CD8-positive, alpha-beta T cell (primary cell): ENCODE measurements at regions of chr14 and their contacts with region 1.

Region 1: DNA sequence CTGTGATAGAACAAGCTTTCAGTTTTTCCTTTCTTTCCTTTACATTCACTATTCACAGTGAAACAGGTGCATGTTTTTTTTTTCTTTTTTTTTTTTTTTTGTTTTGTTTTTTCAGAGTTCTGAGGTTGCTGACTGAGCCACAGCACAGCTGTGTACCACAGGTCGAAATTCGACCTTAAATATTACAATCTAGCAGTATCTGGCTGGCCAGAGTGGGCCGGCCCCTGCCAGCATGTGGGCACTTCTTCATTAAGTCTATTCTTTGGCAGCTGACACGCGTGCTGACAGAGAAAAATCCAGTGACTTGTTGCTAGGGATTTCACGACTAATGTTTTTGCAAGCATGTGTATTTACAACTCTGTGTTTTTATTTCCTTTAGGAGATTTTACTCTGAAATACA is 33.9 kb downstream of the FBXO33 start:
- DNase-seq: no peak
- ATAC-seq: no peak
- H3K4me3 ChIP-seq: no peak overlapping the region
- H3K4me3 Mint-ChIP-seq: no peak overlapping the region
- H3K27ac ChIP-seq: no peak overlapping the region
- H3K27ac Mint-ChIP-seq: no peak overlapping the region
- H3K4me1 ChIP-seq: no peaks in the 10 kb centered on the region
- H3K4me1 Mint-ChIP-seq: peaks cover 6% of the 10 kb centered on the region
- H3K27me3 ChIP-seq: no peaks in the 10 kb centered on the region
- H3K27me3 Mint-ChIP-seq: no peaks in the 10 kb centered on the region
- CTCF ChIP-seq: no peak

Region 2: DNA sequence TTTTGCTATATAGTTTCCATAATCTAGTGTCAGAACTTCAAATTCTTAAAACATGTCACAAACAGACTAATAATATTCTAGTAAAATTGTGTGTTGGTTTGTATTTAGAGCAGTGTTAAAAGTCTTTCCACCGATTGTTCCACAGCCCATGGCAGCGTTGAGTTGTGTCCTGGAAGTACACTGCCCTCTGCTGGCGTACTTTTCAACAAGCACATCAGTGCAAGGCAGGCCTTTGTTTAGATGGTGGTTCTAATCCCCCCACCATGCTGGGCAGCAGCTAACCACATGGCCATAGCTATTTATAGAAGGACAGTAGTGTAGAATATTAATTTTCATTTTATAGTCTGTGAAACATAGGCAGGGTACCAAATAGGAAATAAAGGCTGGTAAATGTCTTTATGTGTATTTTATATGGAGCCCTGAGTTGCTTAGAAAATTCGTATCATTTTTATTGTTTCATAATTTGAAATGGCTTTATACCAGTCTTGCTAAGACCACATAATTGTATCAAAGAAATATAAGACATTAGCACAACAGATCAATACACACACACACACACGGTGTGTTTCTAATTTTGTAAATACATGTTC is 530.7 kb before region 1 on chr14:
- CTCF ChIA-PET with region 1: no interaction called
- POLR2A ChIA-PET with region 1: no interaction called
- intact Hi-C with region 1: no loop called
- DNase-seq: peak in 8 of 9 experiments; percentile 26 to 70 (median 48)
- ATAC-seq: peak; percentile 34
- H3K4me3 ChIP-seq: no peak overlapping the region
- H3K4me3 Mint-ChIP-seq: no peak overlapping the region
- H3K27ac ChIP-seq: no peak overlapping the region
- H3K27ac Mint-ChIP-seq: no peak overlapping the region
- H3K4me1 ChIP-seq: no peaks in the 10 kb centered on the region
- H3K4me1 Mint-ChIP-seq: no peaks in the 10 kb centered on the region
- H3K27me3 ChIP-seq: no peaks in the 10 kb centered on the region
- H3K27me3 Mint-ChIP-seq: peaks cover 2% of the 10 kb centered on the region
- CTCF ChIP-seq: peak; percentile 74

Region 3: GRCh38 chr14:39426605-39427004 is 28.2 kb after region 1 on chr14:
- CTCF ChIA-PET with region 1: no interaction called
- POLR2A ChIA-PET with region 1: interaction called, 9 read pairs
- intact Hi-C with region 1: loop called in 1 of 2 experiments (anchors 2 kb)
- DNase-seq: peak in 2 of 9 experiments; percentile 22 to 46
- ATAC-seq: no peak
- H3K4me3 ChIP-seq: no peak overlapping the region
- H3K4me3 Mint-ChIP-seq: peak overlapping the region; percentile 33
- H3K27ac ChIP-seq: no peak overlapping the region
- H3K27ac Mint-ChIP-seq: peak overlapping the region; percentile 3
- H3K4me1 ChIP-seq: peaks cover 64% of the 10 kb centered on the region
- H3K4me1 Mint-ChIP-seq: peaks cover 82% of the 10 kb centered on the region
- H3K27me3 ChIP-seq: no peaks in the 10 kb centered on the region
- H3K27me3 Mint-ChIP-seq: no peaks in the 10 kb centered on the region
- CTCF ChIP-seq: peak; percentile 19